ENCODE measurements at regions of chr11 and their contacts with region 1.

Region 1: DNA sequence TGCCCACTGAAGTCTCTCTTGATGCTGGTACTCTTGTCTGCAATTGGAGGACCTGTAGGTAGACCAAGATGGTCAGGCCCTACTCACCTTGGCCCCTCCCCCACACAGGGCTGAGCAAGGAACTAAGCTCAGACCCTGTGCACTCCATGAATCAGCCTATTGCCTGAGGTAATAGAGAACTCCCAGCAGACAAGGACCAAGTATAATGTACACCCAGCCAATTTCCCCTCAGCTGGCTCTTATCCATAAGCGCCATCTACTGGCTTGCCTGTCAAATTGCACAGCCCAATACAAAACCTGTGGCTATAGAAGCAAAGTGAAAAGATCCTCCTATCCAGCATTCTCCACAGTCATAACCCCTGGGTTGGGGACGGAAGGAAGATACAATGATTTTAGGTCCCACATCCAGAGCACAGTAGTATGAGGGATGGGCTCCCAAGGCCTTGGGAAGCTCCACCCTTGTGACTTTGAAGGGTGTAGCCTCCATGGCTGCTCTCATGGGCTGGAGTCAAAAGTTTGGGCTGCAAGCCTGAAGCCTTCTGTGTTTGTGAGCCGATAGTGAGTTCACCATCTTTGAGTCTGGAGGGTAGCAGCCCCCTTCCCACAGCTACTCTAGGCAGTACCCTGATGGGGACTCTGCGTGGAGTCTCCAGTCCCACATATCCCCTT is 56.0 kb downstream of the GLYATL2 start:
- DNase-seq: peak; percentile 6 to 42
- ATAC-seq: peak; percentile 64 to 91; a peak in 4 of 6 replicates
- H3K4me3 ChIP-seq: no peak overlapping the region
- H3K27ac ChIP-seq: no peak overlapping the region
- H3K4me1 ChIP-seq: no peaks in the 10 kb centered on the region
- CTCF ChIP-seq: peak; percentile 53
- EP300 ChIP-seq: no peak
- POLR2A ChIP-seq: no peak
- RAD21 ChIP-seq: peak; percentile 46 to 72; a peak in 4 of 5 replicates

Region 2: GRCh38 chr11:58770627-58771457 is 17.6 kb before region 1 on chr11:
- CTCF ChIA-PET with region 1: interaction called, 14 read pairs
- POLR2A ChIA-PET with region 1: no interaction called
- DNase-seq: peak in 1 of 2 experiments; percentile 19
- ATAC-seq: peak in 1 of 2 experiments; percentile 50; a peak in 2 of 6 replicates
- H3K4me3 ChIP-seq: no peak overlapping the region
- H3K27ac ChIP-seq: no peak overlapping the region
- H3K4me1 ChIP-seq: no peaks in the 10 kb centered on the region
- CTCF ChIP-seq: no peak
- EP300 ChIP-seq: no peak
- POLR2A ChIP-seq: no peak
- RAD21 ChIP-seq: no peak

Region 3: GRCh38 chr11:58776891-58777710 is 11.4 kb before region 1 on chr11:
- CTCF ChIA-PET with region 1: interaction called, 14 read pairs
- POLR2A ChIA-PET with region 1: no interaction called
- DNase-seq: no peak
- ATAC-seq: no peak
- H3K4me3 ChIP-seq: no peak overlapping the region
- H3K27ac ChIP-seq: no peak overlapping the region
- H3K4me1 ChIP-seq: no peaks in the 10 kb centered on the region
- CTCF ChIP-seq: no peak
- EP300 ChIP-seq: no peak
- POLR2A ChIP-seq: no peak
- RAD21 ChIP-seq: no peak

Measured in A549 (cell line).